Activated naive CD4-positive, alpha-beta T cell treated with anti-CD3 and anti-CD28 coated beads for 36 hours (primary cell): ENCODE measurements at regions of chr18 and their contacts with region 1.

Region 1: DNA sequence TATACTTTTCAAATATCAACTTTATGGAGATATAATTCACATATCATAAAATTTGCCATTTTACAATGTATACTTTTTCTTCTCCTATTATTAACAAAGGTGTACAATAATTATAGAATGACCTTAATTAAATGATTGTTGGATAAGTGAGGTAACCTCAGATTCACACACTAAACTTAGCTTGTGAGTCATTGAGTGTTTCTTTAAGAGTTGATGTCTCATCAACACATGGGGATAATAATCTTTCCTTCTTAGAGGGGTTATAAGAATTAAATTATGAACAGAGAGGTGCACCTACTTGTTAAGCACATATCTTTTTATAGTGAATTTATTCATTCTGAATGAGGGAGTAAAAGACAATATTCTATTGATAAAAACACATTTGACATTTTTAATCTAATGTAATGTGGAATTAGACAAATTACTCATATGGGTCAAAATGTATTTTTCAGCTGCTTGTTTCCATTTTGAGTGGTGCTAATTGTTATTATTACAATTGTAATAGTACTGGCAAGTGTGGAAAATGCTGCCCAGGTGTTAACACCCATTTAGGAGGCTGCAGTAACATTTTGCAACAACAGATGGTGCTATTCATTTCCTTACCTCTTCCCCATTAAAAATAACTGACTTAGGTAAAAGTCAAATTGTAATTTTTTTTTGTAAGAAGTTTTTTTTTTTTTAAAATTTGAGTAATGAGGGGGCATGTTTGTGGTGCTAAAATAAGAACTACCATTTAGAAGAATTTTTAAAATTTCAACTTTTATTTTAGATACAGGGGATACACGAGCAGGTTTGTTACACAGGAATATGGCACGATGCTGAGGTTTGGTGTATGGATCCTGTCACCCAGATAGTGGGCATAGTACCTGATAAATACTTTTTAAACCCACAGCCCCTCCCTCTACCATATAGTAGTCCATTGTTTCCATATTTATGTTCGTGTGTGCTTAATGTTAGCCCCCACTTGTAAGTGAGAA is 32.1 kb upstream of the DYNAP start:
- DNase-seq: peak; percentile 5
- H3K4me3 Mint-ChIP-seq: no peak overlapping the region
- H3K27ac Mint-ChIP-seq: no peak overlapping the region
- H3K4me1 Mint-ChIP-seq: no peaks in the 10 kb centered on the region
- H3K27me3 Mint-ChIP-seq: peaks cover 2% of the 10 kb centered on the region

Region 2: GRCh38 chr18:54392543-54393023 is 166.3 kb before region 1 on chr18:
- CTCF ChIA-PET with region 1: interaction called, 3 read pairs
- intact Hi-C with region 1: loop called (anchors 1 kb)
- DNase-seq: no peak
- H3K4me3 Mint-ChIP-seq: no peak overlapping the region
- H3K27ac Mint-ChIP-seq: no peak overlapping the region
- H3K4me1 Mint-ChIP-seq: peaks cover 4% of the 10 kb centered on the region
- H3K27me3 Mint-ChIP-seq: peaks cover 21% of the 10 kb centered on the region

Region 3: GRCh38 chr18:54444319-54444914 is 114.5 kb before region 1 on chr18:
- CTCF ChIA-PET with region 1: interaction called, 3 read pairs
- intact Hi-C with region 1: loop called (anchors 1 kb)
- DNase-seq: peak; percentile 67
- H3K4me3 Mint-ChIP-seq: no peak overlapping the region
- H3K27ac Mint-ChIP-seq: no peak overlapping the region
- H3K4me1 Mint-ChIP-seq: no peaks in the 10 kb centered on the region
- H3K27me3 Mint-ChIP-seq: peaks cover 21% of the 10 kb centered on the region

Region 4: GRCh38 chr18:54647176-54647575 is 88.3 kb after region 1 on chr18:
- CTCF ChIA-PET with region 1: no interaction called
- intact Hi-C with region 1: loop called (anchors 1 kb)
- DNase-seq: peak; percentile 27
- H3K4me3 Mint-ChIP-seq: no peak overlapping the region
- H3K27ac Mint-ChIP-seq: no peak overlapping the region
- H3K4me1 Mint-ChIP-seq: no peaks in the 10 kb centered on the region
- H3K27me3 Mint-ChIP-seq: peaks cover 10% of the 10 kb centered on the region

Region 5: GRCh38 chr18:54671291-54671881 is 112.5 kb after region 1 on chr18:
- CTCF ChIA-PET with region 1: interaction called, 12 read pairs
- intact Hi-C with region 1: loop called (anchors 1 kb)
- DNase-seq: no peak
- H3K4me3 Mint-ChIP-seq: no peak overlapping the region
- H3K27ac Mint-ChIP-seq: no peak overlapping the region
- H3K4me1 Mint-ChIP-seq: no peaks in the 10 kb centered on the region
- H3K27me3 Mint-ChIP-seq: peaks cover 7% of the 10 kb centered on the region

Region 6: GRCh38 chr18:54946149-54946581 is 387.3 kb after region 1 on chr18:
- CTCF ChIA-PET with region 1: no interaction called
- intact Hi-C with region 1: loop called (anchors 1 kb)
- DNase-seq: peak; percentile 28
- H3K4me3 Mint-ChIP-seq: peak overlapping the region; percentile 82
- H3K27ac Mint-ChIP-seq: peak overlapping the region; percentile 73
- H3K4me1 Mint-ChIP-seq: peaks cover 14% of the 10 kb centered on the region
- H3K27me3 Mint-ChIP-seq: no peaks in the 10 kb centered on the region

Region 7: DNA sequence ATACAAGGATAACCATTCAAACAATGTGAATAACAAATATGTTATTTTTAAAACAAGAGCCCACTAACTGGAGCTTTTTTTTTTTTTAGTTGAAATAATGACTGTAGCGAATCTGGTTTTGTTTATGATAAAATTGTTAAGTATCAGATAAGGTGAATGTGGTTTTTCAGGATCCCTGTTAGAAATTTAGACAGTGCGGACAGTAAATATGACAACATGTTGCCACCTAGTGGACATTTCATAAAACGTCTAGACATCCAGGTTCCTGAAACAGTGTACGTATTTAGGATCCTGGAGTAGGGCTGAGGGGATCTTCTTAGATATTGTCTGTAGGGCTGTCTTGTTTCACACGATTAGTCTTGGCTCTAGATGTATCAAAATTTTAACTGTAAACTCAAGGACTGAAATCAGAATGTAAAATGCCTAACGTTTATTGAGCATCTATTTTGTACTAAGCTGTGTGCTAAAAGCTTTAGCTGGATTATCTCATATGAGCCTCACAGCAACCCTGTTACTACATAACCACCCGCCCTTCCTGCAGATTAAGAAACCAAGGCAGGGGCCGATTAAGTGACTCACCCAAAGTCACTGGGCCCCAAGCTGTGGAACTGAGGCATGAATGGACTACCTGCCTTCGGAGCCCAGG is 424.3 kb after region 1 on chr18:
- CTCF ChIA-PET with region 1: no interaction called
- intact Hi-C with region 1: loop called (anchors 1 kb)
- DNase-seq: no peak
- H3K4me3 Mint-ChIP-seq: no peak overlapping the region
- H3K27ac Mint-ChIP-seq: no peak overlapping the region
- H3K4me1 Mint-ChIP-seq: no peaks in the 10 kb centered on the region
- H3K27me3 Mint-ChIP-seq: no peaks in the 10 kb centered on the region

Region 8: GRCh38 chr18:55136864-55137263 is 578.0 kb after region 1 on chr18:
- CTCF ChIA-PET with region 1: no interaction called
- intact Hi-C with region 1: no loop called
- DNase-seq: no peak
- H3K4me3 Mint-ChIP-seq: no peak overlapping the region
- H3K27ac Mint-ChIP-seq: no peak overlapping the region
- H3K4me1 Mint-ChIP-seq: no peaks in the 10 kb centered on the region
- H3K27me3 Mint-ChIP-seq: peaks cover 3% of the 10 kb centered on the region